ENCODE measurements at regions of chr14 and their contacts with region 1.

Region 1: DNA sequence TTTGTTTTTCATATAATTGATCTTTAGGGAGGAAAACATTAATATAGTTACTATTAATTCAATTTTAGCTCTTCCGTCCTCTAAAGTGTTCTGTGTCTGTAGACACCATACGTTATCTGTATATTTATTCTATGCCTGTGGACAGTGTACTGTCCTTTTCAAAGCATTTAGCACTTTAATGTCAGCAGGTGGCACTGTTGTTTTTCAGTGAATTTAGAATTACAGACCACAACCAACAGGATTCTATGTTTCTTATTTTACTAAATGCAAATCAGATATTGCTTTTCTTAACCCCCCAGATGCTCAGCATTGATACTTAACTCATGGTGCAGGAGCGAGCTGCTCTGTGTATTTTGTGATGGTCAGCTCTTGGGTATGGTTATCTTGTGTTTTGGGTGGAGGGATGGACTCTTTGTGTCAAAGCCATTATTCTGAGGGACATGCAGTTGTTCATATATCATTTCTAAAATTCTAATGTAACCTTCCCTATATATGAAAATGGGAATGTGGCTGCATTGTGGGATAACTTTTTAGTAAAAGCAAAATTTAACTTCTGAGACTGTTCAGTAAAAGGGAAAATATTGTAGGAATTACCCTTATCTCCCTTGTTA is 65.2 kb downstream of the PAPOLA start:
- DNase-seq: peak; percentile 80
- H3K4me3 ChIP-seq: no peak overlapping the region
- H3K27ac ChIP-seq: peak overlapping the region; percentile 51
- H3K4me1 ChIP-seq: peaks cover 53% of the 10 kb centered on the region
- H3K27me3 ChIP-seq: no peaks in the 10 kb centered on the region
- CTCF ChIP-seq: peak; percentile 74

Region 2: GRCh38 chr14:96852823-96853422 is 285.5 kb after region 1 on chr14:
- CTCF ChIA-PET with region 1: interaction called, 3 read pairs
- POLR2A ChIA-PET with region 1: no interaction called
- intact Hi-C with region 1: loop called (anchors 5 kb)
- DNase-seq: peak; percentile 61
- H3K4me3 ChIP-seq: no peak overlapping the region
- H3K27ac ChIP-seq: peak overlapping the region; percentile 23
- H3K4me1 ChIP-seq: peaks cover 4% of the 10 kb centered on the region
- H3K27me3 ChIP-seq: no peaks in the 10 kb centered on the region
- CTCF ChIP-seq: peak; percentile 76

Region 3: GRCh38 chr14:98085751-98086150 is 1518.4 kb after region 1 on chr14:
- CTCF ChIA-PET with region 1: no interaction called
- POLR2A ChIA-PET with region 1: no interaction called
- intact Hi-C with region 1: no loop called
- DNase-seq: no peak
- H3K4me3 ChIP-seq: no peak overlapping the region
- H3K27ac ChIP-seq: no peak overlapping the region
- H3K4me1 ChIP-seq: no peaks in the 10 kb centered on the region
- H3K27me3 ChIP-seq: no peaks in the 10 kb centered on the region
- CTCF ChIP-seq: no peak

Measured in A673 (cell line).